PC-3 (cell line): ENCODE measurements at regions of chr12 and their contacts with region 1.

Region 1: DNA sequence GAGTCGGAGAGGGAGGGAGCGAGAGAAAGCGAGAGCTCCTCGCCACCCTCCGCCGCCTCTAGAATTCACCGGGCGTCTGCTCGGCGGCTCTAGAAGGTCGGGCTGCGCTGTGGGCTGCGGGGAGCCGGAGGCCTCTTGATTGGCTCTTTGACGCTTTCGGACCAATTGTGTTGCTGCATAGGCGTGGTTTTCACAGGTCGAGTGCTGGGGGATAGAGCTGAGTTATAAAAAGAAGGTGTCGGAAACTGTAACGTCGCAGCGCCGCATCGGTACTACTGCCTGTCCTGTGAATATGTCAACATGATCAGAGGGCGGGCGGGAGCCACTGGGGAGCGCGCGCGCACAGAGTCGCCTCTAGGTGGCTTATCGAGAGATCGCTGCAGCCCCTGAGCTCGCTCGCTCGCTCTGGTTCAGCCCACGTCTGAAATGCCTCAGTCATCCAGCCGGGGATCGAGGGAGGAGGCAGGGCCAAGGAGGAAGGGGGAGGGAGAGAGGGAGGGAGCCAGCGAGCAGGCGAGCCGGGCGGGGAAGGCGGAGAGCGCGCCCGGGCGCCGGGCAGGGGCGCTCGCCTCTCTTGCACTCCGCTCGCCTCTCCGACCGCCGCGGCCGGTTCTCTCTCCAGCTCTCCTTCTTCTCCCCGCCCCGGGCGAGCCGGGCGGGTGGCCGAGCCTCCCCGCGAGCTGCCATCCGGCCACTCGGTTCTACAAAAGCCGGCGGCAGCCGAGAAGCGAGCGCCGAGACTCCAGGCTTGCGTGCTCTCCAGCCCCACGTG is at the start of gene TBX3:
- DNase-seq: peak; percentile 99
- ATAC-seq: peak; percentile 82
- H3K4me3 ChIP-seq: peak within 1 kb of the TSS; percentile 94
- H3K27ac ChIP-seq: peak within 1 kb of the TSS; percentile 95
- H3K4me1 ChIP-seq: peaks cover 15% of the 10 kb centered on the region
- H3K27me3 ChIP-seq: no peaks in the 10 kb centered on the region
- CTCF ChIP-seq: peak; percentile 79
- total RNA-seq, gene TBX3: 89.4 and 123 TPM in 2 replicates

Region 2: GRCh38 chr12:114729731-114730130 is 45.4 kb after region 1 on chr12:
- CTCF ChIA-PET with region 1: no interaction called
- POLR2A ChIA-PET with region 1: no interaction called
- intact Hi-C with region 1: no loop called
- DNase-seq: peak; percentile 47
- ATAC-seq: peak; percentile 57; the same call in 1 of the 2 replicates
- H3K4me3 ChIP-seq: no peak overlapping the region
- H3K27ac ChIP-seq: no peak overlapping the region
- H3K4me1 ChIP-seq: no peaks in the 10 kb centered on the region
- H3K27me3 ChIP-seq: no peaks in the 10 kb centered on the region
- CTCF ChIP-seq: no peak

Region 3: DNA sequence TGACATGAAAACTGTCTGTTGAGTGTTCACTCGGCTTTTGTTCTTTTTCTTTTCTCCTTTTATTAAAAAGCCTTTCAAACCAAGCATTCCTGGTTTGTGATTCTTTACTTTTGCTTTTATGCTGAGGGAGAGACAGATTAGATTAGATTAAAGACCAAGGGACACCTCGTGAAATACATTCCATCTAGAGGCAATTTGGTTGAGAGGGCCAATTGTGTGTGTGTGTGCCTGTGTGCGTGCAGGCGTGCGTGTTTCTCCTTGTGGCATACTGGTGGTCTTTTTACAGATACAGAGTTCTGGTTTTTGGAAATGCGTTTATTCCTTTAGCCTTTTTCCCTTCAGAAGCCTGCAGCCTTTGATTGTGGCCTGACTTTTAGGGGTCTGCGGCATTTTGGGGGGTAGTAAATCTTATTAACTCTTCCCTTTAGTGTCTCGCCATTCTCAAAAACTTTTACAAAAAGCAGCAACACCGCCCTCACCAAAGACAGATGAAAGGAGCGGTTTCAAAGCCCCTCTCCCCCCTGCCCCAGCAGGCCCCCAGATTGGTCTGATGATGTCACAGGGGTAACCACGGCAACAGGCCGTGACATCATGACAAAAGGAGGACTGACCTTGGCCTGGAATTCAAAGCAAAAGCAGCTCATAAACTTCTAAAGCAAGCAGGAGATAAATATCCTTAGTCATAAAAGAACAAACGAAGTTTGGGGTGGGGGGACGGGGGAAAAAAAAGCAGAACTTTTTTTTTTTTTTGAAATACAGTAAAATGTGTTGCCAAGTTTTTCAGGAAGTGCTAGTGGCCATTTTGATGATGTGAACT is 83.8 kb after region 1 on chr12:
- CTCF ChIA-PET with region 1: interaction called, 8 read pairs
- POLR2A ChIA-PET with region 1: interaction called, 7 read pairs
- intact Hi-C with region 1: loop called (anchors 1 kb)
- DNase-seq: peak; percentile 66
- ATAC-seq: peak; percentile 70
- H3K4me3 ChIP-seq: no peak overlapping the region
- H3K27ac ChIP-seq: peak overlapping the region; percentile 40
- H3K4me1 ChIP-seq: peaks cover 10% of the 10 kb centered on the region
- H3K27me3 ChIP-seq: no peaks in the 10 kb centered on the region
- CTCF ChIP-seq: no peak

Region 4: GRCh38 chr12:114903083-114903691 is 218.9 kb after region 1 on chr12:
- CTCF ChIA-PET with region 1: interaction called, 7 read pairs
- POLR2A ChIA-PET with region 1: no interaction called
- intact Hi-C with region 1: loop called (anchors 2 kb)
- DNase-seq: peak; percentile 96
- ATAC-seq: peak; percentile 87
- H3K4me3 ChIP-seq: peak overlapping the region; percentile 61
- H3K27ac ChIP-seq: peak overlapping the region; percentile 94
- H3K4me1 ChIP-seq: peaks cover 47% of the 10 kb centered on the region
- H3K27me3 ChIP-seq: no peaks in the 10 kb centered on the region
- CTCF ChIP-seq: no peak

Region 5: DNA sequence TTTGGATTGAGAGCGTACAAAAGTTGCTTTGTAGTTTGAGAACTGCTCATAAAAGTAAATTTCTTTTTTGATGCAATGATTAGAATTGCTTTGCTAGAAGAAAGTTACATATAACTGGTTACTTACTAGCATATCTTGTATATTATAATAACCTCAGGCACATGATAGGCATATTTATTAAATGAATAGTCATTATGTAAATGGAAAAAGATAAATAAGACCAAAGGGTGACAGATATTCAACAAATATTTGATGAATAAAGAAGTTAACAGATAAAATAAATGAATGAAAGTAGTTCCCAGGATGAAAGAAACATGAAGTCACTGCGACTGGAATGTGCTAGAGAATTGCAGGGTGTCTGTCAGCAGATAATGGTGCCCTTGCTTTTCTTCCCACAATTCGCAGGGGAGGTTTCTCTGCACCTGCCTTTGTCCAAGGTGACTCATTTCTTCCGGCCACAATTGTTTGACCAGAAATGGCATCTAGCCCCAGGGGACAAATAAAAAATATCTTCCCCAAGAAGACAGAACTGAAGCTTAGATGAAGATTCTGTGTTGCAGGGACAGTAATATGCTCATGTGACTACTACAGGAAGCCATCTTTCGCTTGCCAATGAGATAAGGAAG is 315.6 kb after region 1 on chr12:
- CTCF ChIA-PET with region 1: no interaction called
- POLR2A ChIA-PET with region 1: interaction called, 10 read pairs
- intact Hi-C with region 1: loop called (anchors 1 kb)
- DNase-seq: peak; percentile 100
- ATAC-seq: peak; percentile 74
- H3K4me3 ChIP-seq: no peak overlapping the region
- H3K27ac ChIP-seq: peak overlapping the region; percentile 92
- H3K4me1 ChIP-seq: peaks cover 39% of the 10 kb centered on the region
- H3K27me3 ChIP-seq: no peaks in the 10 kb centered on the region
- CTCF ChIP-seq: no peak

Region 6: GRCh38 chr12:115155665-115156645 is 471.7 kb after region 1 on chr12:
- CTCF ChIA-PET with region 1: interaction called, 10 read pairs
- POLR2A ChIA-PET with region 1: interaction called, 37 read pairs
- intact Hi-C with region 1: loop called (anchors 5 kb)
- DNase-seq: peak; percentile 99
- ATAC-seq: peak; percentile 91
- H3K4me3 ChIP-seq: no peak overlapping the region
- H3K27ac ChIP-seq: peak overlapping the region; percentile 96
- H3K4me1 ChIP-seq: peaks cover 21% of the 10 kb centered on the region
- H3K27me3 ChIP-seq: no peaks in the 10 kb centered on the region
- CTCF ChIP-seq: no peak

Region 7: DNA sequence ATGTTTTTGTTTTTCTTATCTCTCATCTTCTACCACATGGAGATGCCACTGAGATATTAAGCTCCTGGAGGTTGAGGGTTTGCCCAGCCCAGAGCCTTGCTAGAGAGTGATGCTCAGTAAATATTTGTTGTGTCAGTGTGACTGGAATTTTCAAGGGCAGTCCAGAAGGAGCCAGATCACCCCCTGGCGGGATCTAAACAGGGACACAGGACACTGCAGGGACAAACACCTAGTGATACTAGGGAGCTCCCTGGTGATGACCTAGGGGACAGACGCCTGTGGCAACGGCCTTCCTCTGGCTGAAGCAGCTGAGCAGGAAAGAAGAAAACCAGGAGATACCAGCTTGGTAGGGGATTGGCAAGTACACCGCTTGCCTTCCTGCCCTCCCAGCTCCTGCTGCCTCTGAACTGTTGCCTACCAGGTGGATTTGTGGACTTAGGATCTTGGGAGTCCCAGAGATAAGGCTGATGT is 714.1 kb after region 1 on chr12:
- CTCF ChIA-PET with region 1: interaction called, 11 read pairs
- POLR2A ChIA-PET with region 1: interaction called, 5 read pairs
- intact Hi-C with region 1: loop called (anchors 1 kb)
- DNase-seq: peak; percentile 86
- ATAC-seq: peak; percentile 97
- H3K4me3 ChIP-seq: no peak overlapping the region
- H3K27ac ChIP-seq: no peak overlapping the region
- H3K4me1 ChIP-seq: peaks cover 22% of the 10 kb centered on the region; the same call in 1 of the 2 replicates
- H3K27me3 ChIP-seq: no peaks in the 10 kb centered on the region
- CTCF ChIP-seq: peak; percentile 96